ENCODE measurements at regions of chr5 and their contacts with region 1.

Region 1: DNA sequence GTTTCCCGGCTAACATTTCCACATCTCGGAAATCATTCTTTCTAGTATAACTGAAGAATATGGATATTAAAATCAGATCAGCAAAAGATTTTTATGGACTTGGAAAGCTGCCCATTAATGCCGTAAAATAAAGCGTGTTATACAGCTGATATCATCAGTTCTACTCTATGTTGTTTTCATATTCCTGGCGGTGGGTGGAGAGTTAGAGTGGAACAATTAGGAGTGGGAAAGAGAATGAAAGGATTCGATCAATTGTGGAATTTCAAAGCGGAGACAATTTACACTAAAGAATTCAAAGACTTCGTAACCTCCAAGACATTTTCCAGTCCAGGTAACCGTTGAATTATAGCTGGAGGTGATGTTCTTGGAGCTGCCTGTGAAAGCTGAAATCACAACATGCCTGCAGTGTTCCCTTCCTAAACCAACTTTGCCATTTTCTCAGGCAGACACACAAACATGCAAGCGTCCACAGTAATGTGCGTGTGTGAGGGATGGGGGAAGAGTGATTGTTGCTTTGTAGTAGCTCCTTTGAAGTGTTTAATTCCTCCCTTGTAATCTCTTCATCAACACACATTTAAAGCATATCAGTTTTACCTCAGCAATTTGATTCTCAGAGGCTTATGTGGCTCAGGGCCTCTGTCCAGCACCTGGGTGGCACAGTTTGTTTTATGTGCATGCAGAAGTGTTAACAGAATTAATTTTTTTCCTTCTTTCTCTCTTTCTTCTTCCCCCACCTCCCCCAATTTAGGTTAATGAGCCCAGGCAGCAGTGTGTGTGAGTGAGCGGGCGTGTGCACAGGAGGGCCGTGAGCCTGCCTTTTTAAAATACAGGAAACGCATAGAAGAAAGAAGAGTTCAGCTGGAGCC is 544.1 kb downstream of the RAB3C start:
- DNase-seq: no peak
- H3K4me3 ChIP-seq: peak overlapping the region; percentile 30 to 69 (median 41)
- H3K4me3 Mint-ChIP-seq: no peak overlapping the region
- H3K27ac ChIP-seq: peak overlapping the region; percentile 19 to 70
- H3K27ac Mint-ChIP-seq: no peak overlapping the region
- H3K4me1 ChIP-seq: peaks cover 6 to 9% of the 10 kb centered on the region in 2 donors
- H3K4me1 Mint-ChIP-seq: peaks cover 10% of the 10 kb centered on the region
- H3K27me3 ChIP-seq: no peaks in the 10 kb centered on the region
- H3K27me3 Mint-ChIP-seq: peaks cover 0 to 2% (median 0%) of the 10 kb centered on the region in 3 donors
- CTCF ChIP-seq: no peak

Region 2: DNA sequence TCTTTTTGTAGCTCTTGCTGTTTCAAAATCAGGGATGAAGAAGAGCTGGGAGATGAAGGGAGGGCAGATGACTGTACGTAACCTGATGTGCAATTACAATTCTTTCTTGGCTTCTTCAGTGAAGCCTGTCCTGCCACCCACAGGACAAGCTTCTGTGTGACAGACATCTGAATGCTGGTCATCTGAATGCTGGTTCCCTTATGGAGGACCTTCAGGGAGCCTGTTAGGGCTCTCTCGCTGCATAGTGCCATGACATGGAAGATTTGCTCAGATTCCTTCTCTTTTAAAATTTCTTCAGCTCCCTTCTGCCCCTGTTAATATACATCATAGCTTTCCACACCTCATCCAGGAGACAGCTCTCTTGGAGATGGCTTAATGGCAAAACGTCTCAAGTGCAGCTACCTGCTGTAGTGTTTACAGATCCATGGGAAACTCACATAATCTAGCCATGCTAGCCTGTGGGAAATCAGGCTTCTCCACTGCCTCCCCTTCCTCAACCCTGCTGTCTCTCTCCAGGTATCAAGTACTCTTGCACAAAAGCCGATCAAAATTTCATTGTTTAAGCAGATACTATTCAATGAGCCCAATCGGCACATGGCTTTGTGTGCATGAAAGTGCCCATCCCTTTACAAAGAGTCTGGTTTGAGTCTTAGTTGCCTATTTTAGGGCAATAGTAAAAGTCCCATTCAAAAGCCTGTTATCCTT is 409.5 kb before region 1 on chr5:
- intact Hi-C with region 1: no loop called
- DNase-seq: no peak
- H3K4me3 ChIP-seq: no peak overlapping the region
- H3K4me3 Mint-ChIP-seq: no peak overlapping the region
- H3K27ac ChIP-seq: no peak overlapping the region
- H3K27ac Mint-ChIP-seq: no peak overlapping the region
- H3K4me1 ChIP-seq: no peaks in the 10 kb centered on the region
- H3K4me1 Mint-ChIP-seq: no peaks in the 10 kb centered on the region
- H3K27me3 ChIP-seq: no peaks in the 10 kb centered on the region
- H3K27me3 Mint-ChIP-seq: no peaks in the 10 kb centered on the region
- CTCF ChIP-seq: no peak

Region 3: DNA sequence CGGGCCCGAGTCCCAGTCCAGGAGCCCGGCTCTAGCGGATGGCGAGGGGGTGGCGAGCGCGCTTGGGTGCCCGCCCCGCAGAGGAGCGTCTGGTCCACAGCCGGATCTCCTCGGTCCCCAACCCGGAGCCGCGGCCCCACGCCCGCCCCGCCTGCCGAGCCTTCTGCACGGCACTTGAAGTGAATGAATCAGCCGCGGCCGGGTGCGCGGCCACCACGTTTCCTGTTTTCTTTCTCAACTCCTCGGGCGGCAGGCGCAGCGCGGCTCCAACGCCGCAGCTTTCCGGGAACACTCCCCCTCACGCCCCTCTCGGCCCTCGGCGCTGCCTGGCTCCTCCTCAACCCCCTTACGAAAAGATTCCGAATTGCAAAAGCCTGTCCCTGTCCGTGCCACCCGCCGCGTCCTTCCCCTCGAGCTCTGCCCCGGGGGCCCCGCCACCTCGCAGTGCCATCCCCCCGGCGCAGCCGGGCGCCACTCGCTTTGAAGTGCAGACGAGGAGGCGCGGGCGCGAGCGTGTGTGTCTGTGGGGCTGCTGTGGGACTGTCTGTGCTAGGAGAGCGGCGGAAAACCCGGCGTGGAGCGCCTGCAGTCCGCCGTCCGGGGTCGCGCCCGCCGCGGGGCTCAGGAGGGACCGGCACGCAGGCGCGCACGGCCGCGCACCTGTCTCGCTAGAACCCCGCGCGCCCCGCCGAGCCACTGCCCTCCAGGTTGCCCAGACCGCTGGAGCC is 87.5 kb before region 1 on chr5:
- intact Hi-C with region 1: loop called (anchors 2 to 5 kb)
- DNase-seq: peak; percentile 83 to 89 (median 87)
- H3K4me3 ChIP-seq: peak overlapping the region; percentile 78 to 88 (median 79)
- H3K4me3 Mint-ChIP-seq: peak overlapping the region; percentile 98 to 100
- H3K27ac ChIP-seq: peak overlapping the region; percentile 22 to 82
- H3K27ac Mint-ChIP-seq: peak overlapping the region; percentile 85 to 94 (median 90)
- H3K4me1 ChIP-seq: peaks cover 29 to 49% of the 10 kb centered on the region in 2 donors
- H3K4me1 Mint-ChIP-seq: peaks cover 52% of the 10 kb centered on the region
- H3K27me3 ChIP-seq: no peaks in the 10 kb centered on the region
- H3K27me3 Mint-ChIP-seq: peaks cover 0 to 3% (median 0%) of the 10 kb centered on the region in 3 donors
- CTCF ChIP-seq: no peak

Region 4: GRCh38 chr5:60820593-60821487 is 1693.9 kb after region 1 on chr5:
- intact Hi-C with region 1: no loop called
- DNase-seq: peak; percentile 15 to 38 (median 16)
- H3K4me3 ChIP-seq: no peak overlapping the region
- H3K4me3 Mint-ChIP-seq: no peak overlapping the region
- H3K27ac ChIP-seq: no peak overlapping the region
- H3K27ac Mint-ChIP-seq: no peak overlapping the region
- H3K4me1 ChIP-seq: peaks cover 3 to 11% of the 10 kb centered on the region in 2 donors
- H3K4me1 Mint-ChIP-seq: no peaks in the 10 kb centered on the region
- H3K27me3 ChIP-seq: no peaks in the 10 kb centered on the region
- H3K27me3 Mint-ChIP-seq: no peaks in the 10 kb centered on the region
- CTCF ChIP-seq: no peak

Measured in CD14-positive monocyte (primary cell).